PC-9 (cell line): ENCODE measurements at regions of chr9 and their contacts with region 1.

Region 1: DNA sequence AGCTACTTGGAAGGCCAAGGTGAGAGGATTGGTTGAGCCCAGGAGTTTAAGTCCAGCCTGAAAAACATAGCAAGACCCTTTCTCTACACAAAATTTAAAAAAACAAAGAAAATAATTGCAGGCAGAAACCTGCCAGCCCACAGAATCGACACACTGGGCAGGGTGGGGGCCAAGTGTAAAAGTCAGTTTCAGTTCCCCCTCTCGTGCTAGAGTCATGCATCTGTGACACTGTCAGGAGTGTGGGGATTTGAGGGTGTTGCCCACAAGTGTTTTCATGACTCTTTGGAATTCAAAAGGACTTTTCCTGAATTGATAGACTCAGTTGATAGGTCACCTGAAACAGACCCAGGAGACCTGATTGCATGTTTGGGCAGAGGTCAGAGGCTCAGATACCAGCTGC is 47.6 kb downstream of the PRRC2B start:
- DNase-seq: no peak
- H3K4me3 ChIP-seq: no peak overlapping the region
- H3K27ac ChIP-seq: no peak overlapping the region
- H3K4me1 ChIP-seq: no peaks in the 10 kb centered on the region
- H3K27me3 ChIP-seq: no peaks in the 10 kb centered on the region
- CTCF ChIP-seq: no peak

Region 2: DNA sequence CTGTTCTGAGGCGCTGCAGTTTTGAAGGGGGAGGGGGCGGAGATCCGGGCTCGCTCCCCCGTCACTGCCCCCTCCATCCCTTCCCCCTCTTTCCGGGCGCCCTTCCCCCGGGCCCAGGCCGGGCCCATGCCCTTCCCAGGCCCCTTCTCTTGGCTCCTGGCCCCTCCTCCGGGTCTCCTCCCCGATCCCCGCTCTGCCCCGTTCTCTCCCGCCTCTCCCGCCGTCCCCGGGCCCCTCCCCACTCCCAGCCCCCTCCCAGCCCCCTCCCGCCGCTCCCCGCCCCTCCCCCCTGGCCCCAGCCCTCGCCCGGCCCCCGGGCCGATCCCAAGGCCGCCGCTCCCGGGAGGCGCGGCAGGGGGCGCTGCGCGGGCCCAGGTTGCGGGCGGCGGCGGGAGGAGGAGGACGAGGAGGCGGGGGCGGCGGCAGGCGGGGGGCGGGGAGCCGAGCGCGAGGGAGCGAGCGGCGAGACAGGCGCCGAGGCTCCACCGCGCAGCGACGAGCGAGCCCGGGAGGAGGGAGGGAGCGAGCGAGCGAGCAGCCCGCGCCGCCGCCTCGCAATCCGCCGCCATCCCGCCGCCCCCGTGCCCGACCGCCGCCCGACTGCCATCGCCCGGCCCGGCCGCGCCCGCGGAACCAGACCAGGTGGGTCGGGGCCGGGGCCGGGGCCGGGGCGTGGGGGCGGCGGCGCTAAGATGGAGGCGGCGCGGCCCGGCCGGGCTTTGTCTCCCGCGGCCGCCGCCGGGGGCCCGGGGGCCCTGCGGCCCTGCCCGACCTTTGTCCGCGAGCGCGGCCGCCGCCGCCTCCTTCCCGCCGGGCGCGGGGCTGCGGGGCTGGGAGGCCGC is 47.6 kb before region 1 on chr9 and contains the start of gene PRRC2B:
- CTCF ChIA-PET with region 1: no interaction called
- POLR2A ChIA-PET with region 1: interaction called, 12 read pairs
- intact Hi-C with region 1: no loop called
- DNase-seq: peak; percentile 49 to 91
- H3K4me3 ChIP-seq: peak within 1 kb of the TSS; percentile 97
- H3K27ac ChIP-seq: peak within 1 kb of the TSS; percentile 73
- H3K4me1 ChIP-seq: peaks cover 50% of the 10 kb centered on the region
- H3K27me3 ChIP-seq: no peaks in the 10 kb centered on the region
- CTCF ChIP-seq: 0 out of 2 replicates have a peak, but pooled peaks have one; percentile 20
- total RNA-seq, gene PRRC2B: 307 and 361 TPM in 2 replicates

Region 3: GRCh38 chr9:131981116-131981776 is 539.8 kb after region 1 on chr9:
- CTCF ChIA-PET with region 1: no interaction called
- POLR2A ChIA-PET with region 1: no interaction called
- intact Hi-C with region 1: no loop called
- DNase-seq: no peak
- H3K4me3 ChIP-seq: no peak overlapping the region
- H3K27ac ChIP-seq: no peak overlapping the region
- H3K4me1 ChIP-seq: no peaks in the 10 kb centered on the region; the same call in 1 of the 2 replicates
- H3K27me3 ChIP-seq: no peaks in the 10 kb centered on the region
- CTCF ChIP-seq: no peak